Activated CD4-positive, alpha-beta T cell treated with anti-CD3 and anti-CD28 coated beads, Interleukin-2, amount 10 ng/mL, durations not matched to agents 24 days and 14 days (primary cell): ENCODE measurements at regions of chr3 and their contacts with region 1.

Region 1: DNA sequence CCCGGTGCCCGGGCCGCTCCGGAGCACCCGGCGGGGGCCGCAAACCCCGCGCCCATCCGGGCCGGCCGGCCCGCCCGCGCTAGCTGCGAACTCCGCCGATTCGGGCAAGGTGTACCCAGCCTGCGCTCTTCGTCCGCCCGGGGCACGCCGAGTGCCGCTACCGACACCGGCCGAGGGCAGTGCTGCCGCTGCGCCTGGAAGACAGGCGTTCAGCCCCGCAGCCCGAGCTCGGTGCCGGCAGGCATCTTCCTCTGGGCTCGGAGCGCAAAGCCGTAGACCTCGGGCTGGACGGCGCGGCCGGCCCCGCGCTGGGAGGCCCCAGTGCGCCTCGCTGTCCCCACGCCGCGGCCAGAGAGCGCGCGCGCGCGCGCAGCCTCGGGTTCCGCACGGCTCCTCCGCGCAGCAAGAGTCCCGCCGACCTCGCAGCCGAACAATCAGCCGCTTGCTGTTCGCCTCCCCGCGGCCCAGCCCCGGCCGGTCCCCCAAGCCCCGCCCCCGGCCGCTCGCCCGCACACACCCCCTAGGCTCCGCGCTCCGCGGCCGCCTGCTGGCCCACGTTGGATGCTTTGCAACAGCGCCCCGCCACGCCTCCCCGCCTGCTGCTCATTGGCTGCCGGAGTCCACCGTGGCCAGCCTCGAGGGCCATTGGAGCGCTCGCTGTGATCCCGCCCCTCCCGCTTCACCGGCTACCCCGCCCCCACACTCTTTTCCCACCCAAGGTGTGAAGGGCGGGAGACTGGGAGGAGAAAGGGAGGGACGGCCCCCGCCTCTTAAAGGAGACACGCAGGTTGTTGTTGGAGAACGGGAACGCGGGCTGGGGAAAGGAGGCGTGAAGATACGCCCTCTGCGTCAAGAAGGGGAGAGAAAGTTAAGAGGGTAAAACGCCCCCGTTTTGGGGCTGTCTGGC is at the start of gene LRIG1:
- DNase-seq: peak; percentile 100
- H3K4me3 Mint-ChIP-seq: peak within 1 kb of the TSS; percentile 94
- H3K27ac Mint-ChIP-seq: peak within 1 kb of the TSS; percentile 91
- H3K4me1 Mint-ChIP-seq: peaks cover 55% of the 10 kb centered on the region
- H3K27me3 Mint-ChIP-seq: peaks cover 22% of the 10 kb centered on the region
- total RNA-seq, gene LRIG1: 50.3 and 52.8 TPM in 2 replicates

Region 2: DNA sequence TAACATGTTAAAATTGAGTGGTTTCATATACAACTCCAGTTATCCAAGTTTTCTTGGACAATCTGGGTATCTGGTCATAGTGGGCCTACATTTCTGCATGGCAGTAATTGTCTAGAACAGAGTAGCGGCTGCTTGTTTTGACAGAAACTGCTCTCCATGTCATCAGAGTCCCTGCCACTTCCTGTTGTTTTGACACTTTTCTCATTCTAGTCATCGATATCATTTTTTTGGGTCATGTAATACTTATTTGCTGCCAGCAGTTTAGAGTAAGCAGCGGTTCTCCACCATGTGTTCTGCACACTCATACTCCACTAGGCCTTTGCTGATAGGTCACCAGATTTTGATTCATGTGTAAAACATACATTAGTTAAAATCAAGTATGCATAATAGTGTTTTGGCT is 198.5 kb before region 1 on chr3:
- intact Hi-C with region 1: loop called (anchors 5 kb)
- DNase-seq: peak; percentile 80
- H3K4me3 Mint-ChIP-seq: peak overlapping the region; percentile 68
- H3K27ac Mint-ChIP-seq: peak overlapping the region; percentile 95
- H3K4me1 Mint-ChIP-seq: peaks cover 53% of the 10 kb centered on the region
- H3K27me3 Mint-ChIP-seq: no peaks in the 10 kb centered on the region

Region 3: DNA sequence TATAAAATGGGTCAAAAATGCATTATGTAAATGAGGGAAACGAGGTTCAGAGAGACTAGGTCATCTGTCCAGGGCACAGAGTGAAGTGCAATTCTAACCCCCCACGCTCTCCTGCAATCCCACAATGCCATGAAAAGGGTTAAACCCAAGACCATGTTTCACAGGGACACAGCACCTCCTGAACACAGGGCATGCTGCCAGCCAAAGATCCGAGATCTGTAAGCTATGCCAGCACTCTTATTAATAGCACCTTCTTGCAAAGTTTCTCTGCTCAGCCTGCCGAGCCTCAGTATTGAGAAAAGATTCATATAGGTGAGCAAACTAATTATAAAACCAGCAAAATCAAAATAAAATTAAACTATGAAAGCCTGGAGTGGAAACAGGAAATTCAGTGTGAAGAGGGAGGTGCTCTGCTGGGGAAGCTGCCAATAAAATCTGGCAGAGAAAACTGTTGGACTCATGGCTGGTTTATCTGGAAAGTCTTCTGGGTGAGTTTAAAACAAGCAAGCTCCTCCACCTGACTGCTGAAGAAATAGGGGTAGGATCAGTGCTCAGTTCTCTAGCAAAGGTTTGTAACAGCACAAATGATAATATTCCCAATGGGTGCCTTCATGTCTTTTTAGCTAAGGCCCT is 50.3 kb before region 1 on chr3:
- intact Hi-C with region 1: loop called (anchors 10 kb)
- DNase-seq: no peak
- H3K4me3 Mint-ChIP-seq: no peak overlapping the region
- H3K27ac Mint-ChIP-seq: no peak overlapping the region
- H3K4me1 Mint-ChIP-seq: peaks cover 13% of the 10 kb centered on the region
- H3K27me3 Mint-ChIP-seq: no peaks in the 10 kb centered on the region

Region 4: GRCh38 chr3:66483406-66483906 is 17.4 kb before region 1 on chr3:
- intact Hi-C with region 1: loop called (anchors 1 kb)
- DNase-seq: peak; percentile 73
- H3K4me3 Mint-ChIP-seq: peak overlapping the region; percentile 66
- H3K27ac Mint-ChIP-seq: peak overlapping the region; percentile 39
- H3K4me1 Mint-ChIP-seq: peaks cover 83% of the 10 kb centered on the region
- H3K27me3 Mint-ChIP-seq: no peaks in the 10 kb centered on the region